Endothelial cell of umbilical vein (primary cell): ENCODE measurements at regions of chr2 and their contacts with region 1.

Region 1: DNA sequence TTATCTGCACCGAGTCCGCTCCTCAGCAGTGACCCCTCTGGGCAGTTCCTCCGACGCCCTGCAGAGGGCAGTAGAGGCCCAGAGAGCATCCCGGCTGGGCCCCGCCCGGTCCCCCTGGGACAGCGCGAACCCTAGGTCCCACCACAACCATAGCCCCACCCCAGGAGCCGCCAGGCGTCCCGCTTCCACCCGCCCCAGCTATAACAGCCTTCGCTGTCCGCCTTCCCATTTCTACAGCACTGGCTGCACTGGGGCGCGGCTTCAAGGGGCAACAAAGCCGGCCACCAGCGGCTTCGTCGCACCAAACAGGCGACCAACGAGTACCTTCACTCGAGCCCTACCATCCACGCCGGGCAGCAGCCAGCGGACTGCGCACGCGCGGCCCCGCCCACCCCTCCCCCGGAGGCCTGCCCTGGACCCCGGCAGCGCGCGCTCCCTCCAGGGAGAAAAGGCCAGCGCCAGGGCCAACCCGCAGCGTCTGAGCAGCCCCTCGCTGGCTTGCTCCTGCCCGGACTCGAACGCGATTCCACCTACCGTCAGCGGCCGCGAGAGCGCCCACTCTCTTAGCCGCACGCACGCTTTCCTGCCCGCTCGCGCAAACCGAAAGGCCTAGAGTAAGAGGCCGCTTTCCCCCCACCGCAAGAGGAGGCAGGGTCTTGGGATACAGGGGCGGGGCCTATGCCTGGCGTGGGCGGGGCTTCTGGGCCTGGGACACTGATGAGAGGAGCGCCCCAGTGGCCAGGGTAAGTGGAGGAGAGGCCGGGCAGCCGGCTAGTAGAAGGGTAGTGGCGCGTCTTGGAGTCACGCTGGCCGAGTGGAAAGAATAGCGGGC is at the start of gene NHEJ1:
- DNase-seq: peak; percentile 96
- H3K4me3 ChIP-seq: peak within 1 kb of the TSS; percentile 24 to 89 (median 41)
- H3K27ac ChIP-seq: no peak within 1 kb of the TSS
- H3K4me1 ChIP-seq: peaks cover 10% of the 10 kb centered on the region
- H3K27me3 ChIP-seq: no peaks in the 10 kb centered on the region
- CTCF ChIP-seq: peak; percentile 96 to 99
- POLR2A ChIP-seq: peak; percentile 76
- total RNA-seq, gene NHEJ1: 12.1 and 12.9 TPM in 2 replicates

Region 2: GRCh38 chr2:219171231-219171651 is 10.8 kb after region 1 on chr2:
- CTCF ChIA-PET with region 1: interaction called, 9 read pairs
- POLR2A ChIA-PET with region 1: no interaction called
- dilution Hi-C with region 1: no loop called
- intact Hi-C with region 1: loop called (anchors 1 kb)
- DNase-seq: peak; percentile 76
- H3K4me3 ChIP-seq: no peak overlapping the region
- H3K27ac ChIP-seq: no peak overlapping the region
- H3K4me1 ChIP-seq: no peaks in the 10 kb centered on the region
- H3K27me3 ChIP-seq: no peaks in the 10 kb centered on the region
- CTCF ChIP-seq: peak; percentile 69 to 83
- POLR2A ChIP-seq: no peak

Region 3: DNA sequence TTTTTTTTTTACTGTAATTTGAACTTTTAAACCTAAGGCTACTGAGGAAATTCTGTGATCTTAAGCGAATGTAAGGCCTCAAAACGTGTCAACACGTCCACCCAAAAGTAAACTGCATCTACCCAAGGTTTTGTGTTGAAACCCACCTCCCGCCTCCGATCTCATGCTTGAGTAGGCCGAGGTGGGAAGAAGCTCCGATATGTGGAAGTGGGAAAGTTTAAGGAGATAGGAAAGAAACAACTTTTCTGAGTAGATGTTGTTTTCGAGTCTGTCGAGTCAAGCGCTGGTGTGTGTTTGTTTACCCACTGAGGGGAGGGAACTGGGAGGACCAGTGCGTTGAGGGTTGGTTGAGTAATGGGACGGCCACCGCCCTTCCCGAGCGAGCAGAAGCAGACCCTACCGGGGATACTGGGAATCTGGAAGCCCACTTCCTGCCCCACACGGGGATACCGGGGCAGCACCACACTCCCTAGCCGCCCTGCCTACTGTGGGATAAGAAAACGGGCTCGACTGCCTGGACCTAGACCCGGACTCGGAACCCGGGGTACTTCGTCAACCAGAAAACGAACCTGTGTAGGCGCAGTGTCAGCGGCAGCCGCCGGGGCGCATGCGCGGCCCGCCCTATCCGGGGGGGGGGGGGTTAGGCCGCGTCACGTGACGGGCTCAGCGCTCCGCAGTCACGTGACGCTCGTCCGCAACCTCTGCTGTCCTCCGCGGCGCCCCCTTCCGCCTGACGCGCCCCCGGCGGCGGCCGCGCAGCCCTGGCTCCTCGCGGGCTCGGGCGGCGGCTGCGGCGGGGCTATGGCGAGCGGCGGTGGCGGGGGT is 17.4 kb after region 1 on chr2 and contains the start of gene RETREG2:
- CTCF ChIA-PET with region 1: interaction called, 9 read pairs
- POLR2A ChIA-PET with region 1: no interaction called
- dilution Hi-C with region 1: no loop called
- intact Hi-C with region 1: loop called (anchors 1 kb)
- DNase-seq: peak; percentile 93
- H3K4me3 ChIP-seq: peak within 1 kb of the TSS; percentile 44 to 81 (median 67)
- H3K27ac ChIP-seq: peak within 1 kb of the TSS; percentile 62
- H3K4me1 ChIP-seq: peaks cover 18% of the 10 kb centered on the region
- H3K27me3 ChIP-seq: no peaks in the 10 kb centered on the region
- CTCF ChIP-seq: peak in 1 of 2 donors; percentile 25
- POLR2A ChIP-seq: peak; percentile 97
- total RNA-seq, gene RETREG2: 58.2 and 59.5 TPM in 2 replicates

Region 4: GRCh38 chr2:219229305-219230058 is 69.1 kb after region 1 on chr2 and contains the starts of genes ANKZF1 and ATG9A:
- CTCF ChIA-PET with region 1: no interaction called
- POLR2A ChIA-PET with region 1: no interaction called
- dilution Hi-C with region 1: no loop called
- intact Hi-C with region 1: loop called (anchors 1 kb)
- DNase-seq: peak; percentile 100
- H3K4me3 ChIP-seq: peak within 1 kb of the TSS; percentile 70 to 76 (median 70)
- H3K27ac ChIP-seq: peak within 1 kb of the TSS; percentile 76
- H3K4me1 ChIP-seq: peaks cover 15% of the 10 kb centered on the region
- H3K27me3 ChIP-seq: no peaks in the 10 kb centered on the region
- CTCF ChIP-seq: no peak
- POLR2A ChIP-seq: peak; percentile 85
- total RNA-seq, gene ANKZF1: 34.0 and 36.2 TPM in 2 replicates
- total RNA-seq, gene ATG9A: 62.2 and 65.5 TPM in 2 replicates

Region 5: DNA sequence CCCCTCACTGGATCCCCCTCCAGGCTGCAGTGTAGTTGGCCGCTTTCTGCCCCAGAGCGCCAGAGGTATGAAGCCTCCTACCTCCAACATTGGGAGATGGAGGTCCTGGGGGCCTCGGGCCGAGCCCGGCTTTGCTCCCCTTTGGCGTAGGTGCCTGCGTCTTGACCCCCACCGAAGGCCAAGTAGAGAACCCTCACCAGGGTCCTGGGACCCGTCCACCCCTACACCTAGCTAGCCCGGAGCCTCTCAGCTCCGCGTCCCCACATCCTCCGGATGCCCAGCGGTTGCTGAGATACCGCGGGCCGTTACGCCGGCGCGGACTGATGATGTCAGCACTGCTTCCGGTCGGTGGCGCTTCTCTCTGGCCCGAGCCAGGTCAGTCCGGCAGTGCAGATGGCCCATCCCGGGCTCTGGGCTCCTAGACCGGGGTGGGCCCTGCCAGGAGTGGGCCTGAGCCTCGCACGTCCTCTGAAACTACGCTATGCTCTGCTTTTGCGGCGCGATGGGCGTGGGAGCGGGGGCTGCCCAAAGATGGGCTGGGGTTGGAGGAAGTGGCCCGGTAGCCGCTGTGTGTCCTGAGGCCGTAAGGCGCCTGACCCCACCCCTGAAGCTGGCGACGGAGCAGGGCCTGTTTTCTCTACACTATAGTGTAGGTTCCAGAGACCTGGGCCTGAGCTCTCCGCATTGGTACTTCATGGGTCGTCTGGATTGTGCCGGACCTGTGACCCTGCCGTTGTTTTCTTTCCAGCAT is 84.9 kb after region 1 on chr2 and contains the starts of genes GLB1L and STK16:
- CTCF ChIA-PET with region 1: no interaction called
- POLR2A ChIA-PET with region 1: no interaction called
- dilution Hi-C with region 1: no loop called
- intact Hi-C with region 1: loop called (anchors 1 kb)
- DNase-seq: peak; percentile 91
- H3K4me3 ChIP-seq: peak within 1 kb of the TSS; percentile 67 to 80 (median 67)
- H3K27ac ChIP-seq: peak within 1 kb of the TSS; percentile 92
- H3K4me1 ChIP-seq: peaks cover 28% of the 10 kb centered on the region
- H3K27me3 ChIP-seq: no peaks in the 10 kb centered on the region
- CTCF ChIP-seq: no peak
- POLR2A ChIP-seq: peak; percentile 93
- total RNA-seq, gene GLB1L: 9.2 and 9.5 TPM in 2 replicates
- total RNA-seq, gene STK16: 18.8 and 21.1 TPM in 2 replicates

Region 6: DNA sequence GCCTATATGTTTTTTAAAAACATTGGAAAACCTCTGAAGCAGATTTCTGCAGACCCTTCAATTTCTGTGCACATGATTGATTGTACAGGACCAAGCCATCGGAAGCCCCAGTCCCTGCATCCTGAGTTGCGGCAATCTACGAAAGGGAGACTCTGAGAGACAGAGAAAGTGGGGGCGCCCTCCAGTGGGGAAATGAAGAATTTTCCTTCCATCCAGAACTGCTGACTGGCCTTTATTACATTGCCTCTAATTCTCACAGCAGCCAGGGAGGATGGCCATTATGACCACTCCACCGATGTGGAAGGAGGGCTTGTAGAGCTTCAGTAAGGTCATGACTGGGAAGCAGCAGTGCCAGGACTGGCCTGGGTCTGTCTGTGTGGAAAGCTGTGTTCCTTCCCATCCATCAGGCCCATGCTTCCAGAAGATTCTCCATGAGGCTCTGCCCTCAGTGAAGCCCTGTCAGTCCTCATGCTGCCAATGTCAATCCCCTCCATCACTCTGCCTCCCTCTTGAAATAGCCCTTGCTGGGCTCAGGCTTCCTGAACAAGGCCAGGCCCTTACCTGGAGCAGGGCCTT is 192.1 kb after region 1 on chr2:
- CTCF ChIA-PET with region 1: interaction called, 3 read pairs
- POLR2A ChIA-PET with region 1: no interaction called
- dilution Hi-C with region 1: no loop called
- intact Hi-C with region 1: loop called (anchors 1 kb)
- DNase-seq: peak; percentile 59
- H3K4me3 ChIP-seq: no peak overlapping the region
- H3K27ac ChIP-seq: no peak overlapping the region
- H3K4me1 ChIP-seq: no peaks in the 10 kb centered on the region
- H3K27me3 ChIP-seq: peaks cover 6 to 8% of the 10 kb centered on the region in 2 experiments
- CTCF ChIP-seq: peak; percentile 60 to 72
- POLR2A ChIP-seq: no peak